ENCODE measurements at regions of chr2 and their contacts with region 1.

Region 1: GRCh38 chr2:41966431-41966893 is 81.4 kb upstream of the PKDCC start:
- DNase-seq: peak; percentile 93 to 96
- H3K4me3 ChIP-seq: peak overlapping the region in 1 of 2 donors; percentile 4
- H3K27ac ChIP-seq: peak overlapping the region; percentile 79 to 81
- H3K4me1 ChIP-seq: peaks cover 0 to 66% (median 54%) of the 10 kb centered on the region in 4 donors
- H3K27me3 ChIP-seq: no peaks in the 10 kb centered on the region
- CTCF ChIP-seq: no peak

Region 2: DNA sequence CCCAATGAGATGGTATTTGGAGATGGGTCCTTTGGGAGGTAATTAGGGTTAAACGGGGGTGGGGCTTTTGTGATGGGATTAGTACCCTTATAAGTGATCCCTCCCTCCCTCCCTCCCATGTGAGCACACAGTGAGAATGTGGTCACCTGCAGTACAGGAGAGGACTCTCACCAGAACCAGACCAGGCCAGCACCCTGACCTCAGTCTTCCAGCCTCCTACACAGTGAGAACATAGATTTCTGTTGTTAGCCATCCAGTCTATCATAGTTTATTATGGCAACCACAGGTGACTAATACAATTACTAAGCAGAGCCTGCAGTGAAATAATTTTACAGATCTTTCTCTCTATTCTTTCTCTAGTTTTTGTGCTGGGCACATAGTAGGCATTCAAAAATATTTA is 56.3 kb before region 1 on chr2:
- intact Hi-C with region 1: loop called (anchors 10 kb)
- DNase-seq: no peak
- H3K4me3 ChIP-seq: no peak overlapping the region
- H3K27ac ChIP-seq: no peak overlapping the region
- H3K4me1 ChIP-seq: peaks cover 0 to 51% (median 20%) of the 10 kb centered on the region in 4 donors
- H3K27me3 ChIP-seq: no peaks in the 10 kb centered on the region
- CTCF ChIP-seq: no peak

Measured in tibial artery (tissue), 4 donors.